GM12878 (cell line): ENCODE measurements at regions of chr5 and their contacts with region 1.

Region 1: DNA sequence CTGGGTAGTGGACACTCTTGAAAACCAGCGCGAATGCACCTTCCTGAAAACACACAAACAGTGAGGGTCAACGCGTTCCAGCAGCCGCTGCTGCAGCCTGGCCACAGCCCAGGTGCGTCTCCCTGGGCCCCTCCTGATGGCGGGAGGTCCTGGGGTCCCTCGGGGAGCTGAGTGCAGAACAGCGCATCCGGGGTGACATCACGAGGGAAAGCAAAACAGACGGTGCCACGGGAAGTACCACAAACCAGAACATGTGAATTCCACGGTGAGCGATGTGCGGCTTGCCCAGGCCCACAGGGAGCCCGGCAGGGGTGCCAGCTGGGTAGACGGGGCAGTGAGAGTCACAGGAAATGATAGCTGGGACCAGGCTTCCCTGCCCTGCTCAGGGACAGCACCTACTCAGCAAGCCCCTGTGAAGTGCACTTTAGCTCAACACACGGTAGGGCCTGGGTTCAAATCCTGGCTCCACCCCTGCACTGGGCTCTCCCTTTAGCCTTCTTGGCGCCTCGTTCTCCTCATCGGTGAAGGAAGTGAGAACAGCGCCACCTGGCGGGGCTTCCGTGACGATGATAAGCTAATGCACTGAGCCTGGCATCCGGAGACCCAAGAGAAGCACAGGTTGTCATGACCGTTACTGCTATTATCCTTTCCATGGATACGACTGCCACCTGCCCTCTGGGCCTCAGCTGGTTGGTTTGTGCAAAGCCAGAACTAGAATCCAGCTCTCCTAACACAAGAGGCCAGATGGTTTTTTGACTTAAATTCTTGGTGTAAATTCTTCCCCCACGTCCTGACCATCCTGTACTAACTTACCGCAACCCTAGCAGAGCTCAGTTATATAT is 24.6 kb downstream of the GFPT2 start:
- DNase-seq: peak; percentile 17
- ATAC-seq: peak; percentile 99
- H3K4me3 ChIP-seq: no peak overlapping the region
- H3K27ac ChIP-seq: no peak overlapping the region
- H3K4me1 ChIP-seq: no peaks in the 10 kb centered on the region
- H3K27me3 ChIP-seq: no peaks in the 10 kb centered on the region
- CTCF ChIP-seq: peak; percentile 77 to 89 (median 78)
- EP300 ChIP-seq: no peak
- POLR2A ChIP-seq: no peak
- RAD21 ChIP-seq: peak; percentile 58

Region 2: DNA sequence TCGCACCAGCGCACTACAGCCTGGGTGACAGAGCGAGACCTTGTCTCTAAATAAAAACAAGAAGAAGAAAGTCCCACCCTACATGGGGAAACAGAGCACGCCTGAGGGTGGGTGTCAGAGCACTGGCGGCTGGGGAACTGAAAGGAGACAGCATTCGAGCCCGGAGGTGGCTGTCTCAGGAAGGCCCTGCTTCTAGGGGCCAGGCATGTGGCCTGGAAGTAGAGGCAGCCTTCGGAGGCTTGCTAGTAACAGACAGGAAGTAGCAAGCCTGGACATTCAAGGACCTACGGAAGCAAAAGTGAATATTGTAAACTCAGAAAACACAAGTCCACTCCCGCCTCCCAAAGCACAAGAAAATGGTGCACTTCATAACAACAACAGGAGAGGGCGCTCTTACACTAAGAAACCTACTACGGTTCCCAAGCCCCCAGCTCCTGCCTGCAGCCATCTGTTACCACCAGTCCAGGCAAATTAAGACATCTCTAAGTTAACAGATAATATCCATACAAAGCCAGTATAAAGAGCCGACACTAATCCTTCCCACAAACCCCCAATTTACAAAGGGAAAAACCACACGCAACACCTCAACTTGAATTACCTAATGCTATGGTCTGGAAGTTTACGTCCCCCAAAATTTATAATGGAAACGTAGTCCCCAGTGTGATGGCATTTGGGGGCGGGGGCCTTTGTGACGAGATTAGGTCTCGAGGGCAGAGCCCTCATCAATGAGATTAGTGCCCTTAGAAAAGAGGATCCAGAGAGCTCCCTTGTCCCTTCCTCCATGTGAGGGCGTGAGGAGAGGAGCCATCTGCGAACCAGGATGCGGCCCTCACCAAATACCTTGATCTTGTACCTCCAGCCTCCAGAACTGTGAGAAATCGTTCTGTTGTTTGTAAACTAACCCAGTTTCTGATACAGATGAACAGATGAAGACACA is 127.2 kb before region 1 on chr5:
- CTCF ChIA-PET with region 1: interaction called, 5 read pairs
- POLR2A ChIA-PET with region 1: no interaction called
- RAD21 ChIA-PET with region 1: interaction called, 4 read pairs
- SMC1A ChIA-PET with region 1: no interaction called
- in situ Hi-C with region 1: no loop called
- intact Hi-C with region 1: loop called (anchors 1 kb)
- DNase-seq: no peak
- ATAC-seq: no peak
- H3K4me3 ChIP-seq: no peak overlapping the region
- H3K27ac ChIP-seq: no peak overlapping the region
- H3K4me1 ChIP-seq: no peaks in the 10 kb centered on the region
- H3K27me3 ChIP-seq: no peaks in the 10 kb centered on the region
- CTCF ChIP-seq: peak; percentile 30 to 47 (median 33); a peak in 4 of 6 replicates
- EP300 ChIP-seq: no peak
- POLR2A ChIP-seq: no peak
- RAD21 ChIP-seq: peak; percentile 30; the same call in 1 of the 2 replicates

Region 3: DNA sequence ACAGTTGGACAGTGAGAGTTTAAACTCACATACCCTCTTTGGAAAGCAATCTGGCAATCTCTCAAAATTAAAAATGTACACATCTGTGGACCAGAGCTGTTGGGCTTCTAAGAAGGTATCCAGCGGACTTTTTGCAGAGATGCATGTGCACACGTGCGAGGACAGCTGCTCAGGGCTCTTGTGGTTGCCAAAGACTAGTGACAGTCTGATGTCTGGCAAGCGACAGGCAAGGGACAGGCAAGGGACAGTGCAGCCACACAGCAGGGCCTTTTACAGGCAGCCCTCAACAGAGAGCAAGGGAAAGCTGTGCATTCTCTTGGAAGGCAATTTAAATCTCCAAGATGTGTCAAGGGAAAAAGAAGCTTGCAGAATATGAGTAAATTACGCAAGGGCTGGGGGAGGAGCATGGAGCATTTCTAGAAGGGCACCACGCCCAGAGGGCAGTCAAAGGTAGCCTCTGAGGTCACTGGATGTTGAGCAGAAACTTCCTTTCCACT is 15.4 kb after region 1 on chr5:
- CTCF ChIA-PET with region 1: interaction called, 20 read pairs
- POLR2A ChIA-PET with region 1: no interaction called
- RAD21 ChIA-PET with region 1: no interaction called
- SMC1A ChIA-PET with region 1: interaction called, 4 read pairs
- in situ Hi-C with region 1: no loop called
- intact Hi-C with region 1: no loop called
- DNase-seq: no peak
- ATAC-seq: no peak
- H3K4me3 ChIP-seq: no peak overlapping the region
- H3K27ac ChIP-seq: no peak overlapping the region
- H3K4me1 ChIP-seq: no peaks in the 10 kb centered on the region
- H3K27me3 ChIP-seq: peaks cover 0 to 2% of the 10 kb centered on the region in 2 experiments; a peak in 2 of 4 replicates
- CTCF ChIP-seq: no peak
- EP300 ChIP-seq: no peak
- POLR2A ChIP-seq: no peak
- RAD21 ChIP-seq: no peak

Region 4: DNA sequence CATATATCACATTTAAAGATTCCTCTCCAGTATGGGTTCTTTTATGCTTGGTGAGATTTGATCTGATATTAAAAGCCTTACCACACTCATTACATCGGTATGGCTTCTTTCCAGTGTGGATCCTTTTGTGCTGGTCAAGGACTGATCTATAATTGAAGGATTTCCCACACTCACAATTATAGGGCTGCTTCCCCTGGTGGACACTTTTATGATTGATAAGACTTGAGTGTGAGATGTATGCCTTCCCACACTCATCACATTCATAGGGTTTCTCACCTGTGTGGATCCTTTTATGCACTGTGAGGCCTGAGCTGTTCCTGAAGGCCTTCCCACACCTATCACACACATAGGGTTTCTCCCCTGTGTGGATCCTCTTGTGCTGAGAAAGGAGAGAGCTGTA is 520.4 kb after region 1 on chr5:
- CTCF ChIA-PET with region 1: no interaction called
- POLR2A ChIA-PET with region 1: no interaction called
- RAD21 ChIA-PET with region 1: no interaction called
- SMC1A ChIA-PET with region 1: no interaction called
- in situ Hi-C with region 1: no loop called
- intact Hi-C with region 1: no loop called
- DNase-seq: no peak
- ATAC-seq: no peak
- H3K4me3 ChIP-seq: no peak overlapping the region
- H3K27ac ChIP-seq: no peak overlapping the region
- H3K4me1 ChIP-seq: no peaks in the 10 kb centered on the region
- H3K27me3 ChIP-seq: no peaks in the 10 kb centered on the region
- CTCF ChIP-seq: no peak
- EP300 ChIP-seq: no peak
- POLR2A ChIP-seq: no peak
- RAD21 ChIP-seq: no peak